ENCODE measurements at regions of chr6 and their contacts with region 1.

Region 1: DNA sequence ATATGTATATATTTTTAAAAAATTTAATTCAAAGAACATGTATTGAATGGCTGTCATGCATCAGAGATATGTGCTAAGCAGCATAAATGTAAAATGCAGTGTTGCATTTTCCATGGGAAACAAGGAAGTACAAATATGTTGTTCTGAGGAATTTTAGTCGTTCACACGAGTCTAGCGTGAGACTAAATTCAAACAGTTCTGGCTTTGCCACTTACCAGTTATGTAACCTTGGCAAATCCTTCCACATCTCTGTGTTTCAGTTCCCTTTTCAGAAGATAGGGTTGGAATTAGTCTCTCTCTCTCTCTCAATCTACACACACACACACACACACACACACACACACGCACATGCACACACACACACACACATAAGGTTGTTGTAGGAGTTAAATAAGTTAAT is 305.4 kb downstream of the UTRN start:
- H3K4me3 Mint-ChIP-seq: no peak overlapping the region
- H3K27ac Mint-ChIP-seq: peak overlapping the region; percentile 59
- H3K4me1 Mint-ChIP-seq: peaks cover 2% of the 10 kb centered on the region
- H3K27me3 Mint-ChIP-seq: no peaks in the 10 kb centered on the region

Region 2: GRCh38 chr6:144510859-144511258 is 79.7 kb before region 1 on chr6:
- intact Hi-C with region 1: no loop called
- H3K4me3 Mint-ChIP-seq: no peak overlapping the region
- H3K27ac Mint-ChIP-seq: no peak overlapping the region
- H3K4me1 Mint-ChIP-seq: no peaks in the 10 kb centered on the region
- H3K27me3 Mint-ChIP-seq: no peaks in the 10 kb centered on the region

Region 3: DNA sequence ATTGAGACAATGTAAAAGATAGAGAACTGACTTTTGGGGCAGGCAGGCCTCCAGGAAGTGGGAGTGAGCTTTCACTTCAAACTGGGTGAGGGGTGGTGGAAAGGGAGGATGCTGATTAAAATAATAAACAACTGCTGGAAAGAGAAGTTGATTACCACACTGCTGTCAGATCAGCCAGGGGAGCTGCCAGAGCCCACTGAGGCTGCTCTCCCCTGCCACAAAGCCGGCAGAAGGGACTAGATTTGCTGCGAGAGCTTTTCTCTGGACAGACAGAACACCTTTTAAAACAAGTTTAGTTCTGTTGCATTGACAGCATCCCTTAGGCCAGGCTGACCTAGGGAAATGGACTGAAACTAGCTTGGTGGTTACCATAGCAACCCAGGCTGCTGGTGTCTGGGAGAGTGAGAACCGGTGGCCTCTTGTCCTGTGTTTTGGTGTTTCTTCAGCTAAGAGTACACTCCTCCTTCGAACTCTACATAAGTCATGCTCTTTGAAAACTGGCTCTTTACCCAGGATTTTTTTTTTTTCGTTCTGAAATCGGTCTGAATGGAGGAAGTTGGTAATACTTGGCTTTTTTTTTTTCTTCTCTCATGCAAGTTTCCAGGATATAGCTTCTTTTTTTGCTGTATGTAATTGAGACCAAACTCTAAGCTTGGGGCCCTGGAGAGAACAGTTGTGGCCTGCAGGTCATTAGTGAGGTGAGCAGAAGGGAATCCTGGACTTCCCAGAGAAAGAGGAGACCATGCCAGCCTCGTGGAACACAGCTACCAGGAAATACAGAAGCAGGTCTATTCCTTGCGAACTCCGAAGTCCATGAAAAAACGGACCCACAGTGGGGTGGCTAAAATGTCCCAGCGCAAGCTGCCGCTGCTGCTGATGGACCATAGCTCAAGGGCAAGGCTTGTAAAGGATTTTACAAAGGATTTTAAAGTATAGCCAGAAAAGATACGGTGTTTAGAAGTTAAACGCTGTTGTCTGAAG is 69.0 kb after region 1 on chr6:
- intact Hi-C with region 1: loop called (anchors 5 kb)
- H3K4me3 Mint-ChIP-seq: peak overlapping the region; percentile 69
- H3K27ac Mint-ChIP-seq: peak overlapping the region; percentile 89
- H3K4me1 Mint-ChIP-seq: peaks cover 60% of the 10 kb centered on the region
- H3K27me3 Mint-ChIP-seq: no peaks in the 10 kb centered on the region